GM10248 (cell line): ENCODE measurements at regions of chr22 and their contacts with region 1.

Region 1: DNA sequence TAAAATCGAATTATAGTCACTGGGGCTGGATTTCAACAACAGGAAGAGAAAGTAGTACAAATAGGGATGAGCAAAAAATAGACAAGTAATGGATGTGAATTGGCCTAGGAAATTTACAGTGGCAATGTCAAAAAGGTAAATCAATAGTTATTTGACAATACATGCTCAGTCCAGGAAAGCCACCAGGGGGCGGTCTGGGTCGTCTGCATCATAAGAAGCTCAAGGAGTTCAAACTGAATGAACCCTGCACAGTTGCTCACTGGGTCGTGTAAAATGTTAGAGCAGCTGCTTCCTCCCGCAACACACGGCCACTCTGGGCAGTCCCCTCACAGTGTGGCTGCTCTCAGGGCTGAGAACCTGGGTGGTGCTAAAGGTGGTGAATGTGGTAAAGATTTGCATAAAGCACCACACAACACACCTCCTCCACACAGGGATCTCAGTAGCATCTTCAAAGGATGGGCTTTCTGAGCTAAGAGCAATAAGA is 85.9 kb downstream of the ZNF280B start:
- DNase-seq: peak; percentile 88
- CTCF ChIP-seq: peak; percentile 73

Region 2: DNA sequence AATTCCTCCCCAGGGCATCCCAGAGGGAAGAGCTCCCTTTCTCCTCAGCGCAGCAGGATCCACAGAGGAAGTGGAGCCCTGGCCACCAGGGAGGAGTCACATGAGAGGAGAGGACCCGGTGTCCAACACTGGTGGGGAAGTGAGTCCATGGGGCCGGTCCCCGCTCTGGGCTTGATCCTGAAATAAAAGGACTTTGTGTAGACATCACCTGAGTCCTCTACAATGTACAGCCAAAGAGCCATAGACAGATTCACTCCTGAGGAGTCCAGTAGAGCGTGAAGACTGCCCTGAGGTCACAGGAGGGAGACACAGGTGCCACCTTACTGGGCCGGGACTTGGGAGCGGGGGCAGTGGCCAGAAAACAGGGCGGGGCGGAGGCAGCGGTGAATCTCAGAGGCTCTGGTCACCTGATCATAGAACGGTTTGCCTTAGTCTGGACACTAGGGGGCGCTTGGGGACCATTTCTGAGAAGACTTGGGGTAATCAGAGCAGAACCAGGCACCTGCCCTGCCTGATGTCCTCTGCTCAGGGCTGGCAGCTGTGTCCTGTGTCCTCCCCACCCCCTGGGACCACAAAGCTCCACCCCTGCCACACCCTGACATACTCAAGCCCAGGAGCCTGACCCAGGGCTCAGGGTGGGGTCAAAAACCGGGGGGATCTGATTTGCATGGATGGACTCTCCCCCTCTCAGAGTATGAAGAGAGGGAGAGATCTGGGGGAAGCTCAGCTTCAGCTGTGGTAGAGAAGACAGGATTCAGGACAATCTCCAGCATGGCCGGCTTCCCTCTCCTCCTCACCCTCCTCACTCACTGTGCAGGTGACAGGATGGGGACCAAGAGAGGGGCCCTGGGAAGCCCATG is 65.4 kb before region 1 on chr22:
- CTCF ChIA-PET with region 1: interaction called, 12 read pairs
- POLR2A ChIA-PET with region 1: no interaction called
- DNase-seq: peak; percentile 94
- CTCF ChIP-seq: peak; percentile 68

Region 3: DNA sequence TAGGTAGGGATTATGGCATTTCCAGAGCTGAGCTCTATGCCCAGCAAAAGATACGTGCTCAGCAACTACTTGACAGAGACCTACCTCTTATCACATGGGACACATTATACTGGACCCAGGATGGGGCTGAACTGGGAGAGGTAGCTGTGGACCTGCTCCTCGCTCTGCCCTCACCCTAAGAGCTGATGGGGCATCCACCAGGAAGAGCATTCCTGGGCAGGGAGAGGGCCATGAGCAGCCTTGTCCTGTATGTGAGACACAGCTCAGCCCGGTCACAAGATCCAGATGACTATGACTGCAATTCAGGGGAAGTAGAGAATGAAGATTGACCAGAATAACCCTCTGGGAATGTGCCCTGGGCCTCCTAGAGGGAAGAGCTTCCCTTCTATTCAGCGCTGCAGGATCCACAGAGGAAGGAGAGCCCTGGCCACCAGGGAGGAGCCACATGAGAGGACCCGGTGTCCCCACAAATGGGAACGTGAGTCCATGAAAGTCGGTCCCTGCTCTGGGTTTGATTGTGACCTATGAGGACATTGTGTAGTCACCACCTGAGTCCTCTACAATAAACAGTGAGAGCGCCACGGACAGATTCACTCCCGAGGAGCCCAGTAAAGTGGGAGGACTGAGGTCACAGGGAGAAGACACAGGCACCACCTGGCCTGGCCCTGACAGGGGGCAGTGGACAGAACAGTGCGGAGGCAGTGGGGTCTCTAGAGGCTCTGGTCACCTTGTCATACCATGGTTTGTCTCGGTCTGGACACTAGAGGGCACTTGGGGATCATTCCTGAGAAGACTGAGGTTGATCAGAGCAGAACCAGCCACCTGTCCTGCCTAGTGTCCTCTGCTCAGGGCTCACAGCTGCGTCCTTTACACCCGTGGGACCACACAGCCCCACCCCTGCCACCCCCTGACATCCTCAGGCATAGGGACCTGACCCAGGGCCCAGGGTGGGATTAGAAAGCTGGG is 13.7 kb before region 1 on chr22:
- CTCF ChIA-PET with region 1: interaction called, 21 read pairs
- POLR2A ChIA-PET with region 1: no interaction called
- DNase-seq: peak; percentile 77
- CTCF ChIP-seq: peak; percentile 54

Region 4: DNA sequence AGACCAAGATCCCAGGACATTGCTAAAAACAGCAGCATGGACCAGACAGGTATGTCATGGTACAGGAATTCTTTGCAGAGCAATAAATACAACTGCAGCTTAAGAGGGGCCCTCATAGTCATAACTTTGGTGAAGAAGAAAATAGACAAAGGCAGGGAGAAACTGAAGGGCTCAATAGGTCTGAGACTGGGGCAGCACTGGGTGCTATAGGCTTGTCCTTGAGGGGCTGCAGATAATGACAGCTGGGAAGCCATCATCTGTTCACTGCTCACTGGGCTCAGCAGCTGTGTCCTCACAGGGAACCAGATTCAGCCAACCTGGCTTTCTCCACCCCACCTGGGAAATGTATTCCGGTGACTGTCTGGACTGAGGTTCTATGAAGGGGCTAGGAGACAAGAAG is 17.5 kb after region 1 on chr22:
- CTCF ChIA-PET with region 1: interaction called, 13 read pairs
- POLR2A ChIA-PET with region 1: no interaction called
- DNase-seq: no peak
- CTCF ChIP-seq: no peak